ENCODE measurements at regions of chr7 and their contacts with region 1.

Region 1: GRCh38 chr7:102814025-102814471 is 65.2 kb downstream of the FAM185A start:
- DNase-seq: no peak
- H3K4me3 Mint-ChIP-seq: no peak overlapping the region
- H3K27ac Mint-ChIP-seq: no peak overlapping the region
- H3K4me1 Mint-ChIP-seq: peaks cover 8% of the 10 kb centered on the region
- H3K27me3 Mint-ChIP-seq: no peaks in the 10 kb centered on the region

Region 2: DNA sequence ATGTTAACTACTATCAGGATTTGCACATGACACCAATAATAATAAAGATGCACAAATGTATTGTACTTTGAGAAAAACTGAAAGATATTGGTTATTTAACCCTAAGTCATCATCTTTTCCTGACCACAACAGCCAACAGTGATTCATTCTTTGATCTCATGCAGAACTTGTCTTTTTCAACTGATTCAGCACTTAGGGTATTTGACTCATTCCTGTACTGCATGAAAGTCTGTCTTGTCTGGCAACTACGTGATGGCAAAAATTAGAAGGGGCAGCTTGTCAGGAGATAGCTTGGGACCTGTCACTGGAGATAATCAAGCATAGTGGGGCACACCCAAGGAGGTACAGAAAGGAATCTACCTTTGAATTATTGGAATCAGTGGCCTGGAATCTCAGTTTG is 21.0 kb after region 1 on chr7:
- intact Hi-C with region 1: loop called (anchors 1 kb)
- DNase-seq: peak; percentile 66
- H3K4me3 Mint-ChIP-seq: no peak overlapping the region
- H3K27ac Mint-ChIP-seq: peak overlapping the region; percentile 17
- H3K4me1 Mint-ChIP-seq: peaks cover 8% of the 10 kb centered on the region
- H3K27me3 Mint-ChIP-seq: peaks cover 6% of the 10 kb centered on the region

Region 3: GRCh38 chr7:102874166-102874829 is 60.2 kb after region 1 on chr7:
- intact Hi-C with region 1: loop called (anchors 10 kb)
- DNase-seq: peak; percentile 78
- H3K4me3 Mint-ChIP-seq: peak overlapping the region; percentile 26
- H3K27ac Mint-ChIP-seq: no peak overlapping the region
- H3K4me1 Mint-ChIP-seq: peaks cover 38% of the 10 kb centered on the region
- H3K27me3 Mint-ChIP-seq: peaks cover 10% of the 10 kb centered on the region

Region 4: GRCh38 chr7:102916426-102916825 is 102.4 kb after region 1 on chr7:
- intact Hi-C with region 1: no loop called
- DNase-seq: no peak
- H3K4me3 Mint-ChIP-seq: no peak overlapping the region
- H3K27ac Mint-ChIP-seq: no peak overlapping the region
- H3K4me1 Mint-ChIP-seq: peaks cover 4% of the 10 kb centered on the region
- H3K27me3 Mint-ChIP-seq: peaks cover 10% of the 10 kb centered on the region